WTC11 (cell line): ENCODE measurements at regions of chr1 and their contacts with region 1.

Region 1: DNA sequence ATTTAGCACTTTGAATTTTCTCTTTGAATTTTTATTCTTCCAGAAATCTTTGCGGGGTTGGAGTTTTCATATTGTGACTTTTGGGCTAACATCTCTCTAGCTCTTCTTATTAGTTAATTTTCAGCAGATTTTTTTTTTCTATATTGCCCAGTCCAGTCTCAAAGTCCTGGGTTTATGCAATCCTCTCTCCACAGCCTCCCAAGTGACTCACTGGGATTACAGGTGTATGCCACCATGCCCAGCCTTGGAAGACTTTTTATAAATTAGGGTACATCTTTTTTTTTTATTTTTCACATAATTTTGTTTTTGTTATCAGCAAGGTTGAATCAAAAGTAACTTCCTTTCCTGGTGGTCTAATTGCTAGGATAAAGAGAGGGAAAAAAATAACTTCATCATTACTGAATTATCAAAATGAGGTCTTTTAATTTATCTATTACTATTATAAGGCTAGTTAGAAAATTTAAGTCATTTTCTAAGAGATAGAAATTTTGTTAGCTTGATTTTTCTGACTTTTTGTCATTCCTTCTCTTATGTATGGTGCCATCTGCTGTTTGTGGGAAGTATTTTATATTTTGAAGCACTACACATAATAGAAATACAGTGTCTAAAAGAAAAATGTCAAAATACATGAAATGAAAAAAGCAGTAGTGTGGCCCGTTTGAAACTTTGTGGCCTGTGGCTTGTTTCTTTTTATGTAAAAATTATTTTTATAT is 273.4 kb upstream of the CACYBP start:
- DNase-seq: no peak
- ATAC-seq: no peak
- H3K4me3 Mint-ChIP-seq: no peak overlapping the region
- H3K27ac Mint-ChIP-seq: no peak overlapping the region
- H3K4me1 Mint-ChIP-seq: peaks cover 6% of the 10 kb centered on the region
- H3K27me3 Mint-ChIP-seq: no peaks in the 10 kb centered on the region
- CTCF ChIP-seq: no peak

Region 2: DNA sequence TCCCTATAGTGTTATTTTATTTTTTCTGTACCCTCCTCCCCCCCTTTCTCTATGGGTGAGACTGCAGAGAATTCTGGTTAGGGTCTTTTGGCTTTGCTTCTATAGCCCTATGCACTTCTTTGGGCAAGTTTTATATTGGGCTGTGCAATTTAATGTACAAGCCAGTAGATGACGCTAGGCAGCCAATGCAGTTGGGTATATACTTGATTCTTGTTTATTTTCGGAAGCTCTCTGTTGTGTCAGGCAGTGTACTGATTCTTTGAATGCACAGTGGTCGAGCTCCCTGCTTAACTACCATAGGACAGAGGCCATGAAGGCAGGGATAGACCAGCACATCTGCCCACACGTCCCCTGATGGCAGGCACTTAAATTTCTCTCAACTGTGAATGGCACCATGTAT is 312.7 kb before region 1 on chr1:
- CTCF ChIA-PET with region 1: interaction called, 17 read pairs
- POLR2A ChIA-PET with region 1: no interaction called
- DNase-seq: no peak
- ATAC-seq: peak; percentile 88
- H3K4me3 Mint-ChIP-seq: no peak overlapping the region
- H3K27ac Mint-ChIP-seq: no peak overlapping the region
- H3K4me1 Mint-ChIP-seq: no peaks in the 10 kb centered on the region
- H3K27me3 Mint-ChIP-seq: no peaks in the 10 kb centered on the region
- CTCF ChIP-seq: no peak

Region 3: GRCh38 chr1:174789399-174789798 is 63.1 kb after region 1 on chr1:
- CTCF ChIA-PET with region 1: no interaction called
- POLR2A ChIA-PET with region 1: no interaction called
- DNase-seq: no peak
- ATAC-seq: no peak
- H3K4me3 Mint-ChIP-seq: no peak overlapping the region
- H3K27ac Mint-ChIP-seq: no peak overlapping the region
- H3K4me1 Mint-ChIP-seq: peaks cover 3% of the 10 kb centered on the region; the same call in 1 of the 2 replicates
- H3K27me3 Mint-ChIP-seq: no peaks in the 10 kb centered on the region
- CTCF ChIP-seq: no peak